GM12878 (cell line): ENCODE measurements at regions of chr3 and their contacts with region 1.

Region 1: GRCh38 chr3:183766745-183767606 is 58.4 kb downstream of the MAP6D1 start:
- DNase-seq: no peak
- ATAC-seq: peak; percentile 99
- H3K4me3 ChIP-seq: no peak overlapping the region
- H3K27ac ChIP-seq: no peak overlapping the region
- H3K4me1 ChIP-seq: no peaks in the 10 kb centered on the region
- H3K27me3 ChIP-seq: no peaks in the 10 kb centered on the region
- CTCF ChIP-seq: peak; percentile 67 to 82 (median 79)
- EP300 ChIP-seq: no peak
- POLR2A ChIP-seq: no peak
- RAD21 ChIP-seq: peak; percentile 89

Region 2: GRCh38 chr3:183475016-183475763 is 291.8 kb before region 1 on chr3:
- CTCF ChIA-PET with region 1: interaction called, 71 read pairs
- POLR2A ChIA-PET with region 1: interaction called, 3 read pairs
- RAD21 ChIA-PET with region 1: interaction called, 35 read pairs
- SMC1A ChIA-PET with region 1: interaction called, 50 read pairs
- in situ Hi-C with region 1: no loop called
- intact Hi-C with region 1: no loop called
- DNase-seq: no peak
- ATAC-seq: no peak
- H3K4me3 ChIP-seq: no peak overlapping the region
- H3K27ac ChIP-seq: no peak overlapping the region
- H3K4me1 ChIP-seq: no peaks in the 10 kb centered on the region
- H3K27me3 ChIP-seq: no peaks in the 10 kb centered on the region; a peak in 1 of 4 replicates
- CTCF ChIP-seq: no peak
- EP300 ChIP-seq: no peak
- POLR2A ChIP-seq: no peak
- RAD21 ChIP-seq: no peak

Region 3: GRCh38 chr3:183481582-183481981 is 285.4 kb before region 1 on chr3:
- CTCF ChIA-PET with region 1: interaction called, 15 read pairs
- POLR2A ChIA-PET with region 1: no interaction called
- RAD21 ChIA-PET with region 1: no interaction called
- SMC1A ChIA-PET with region 1: interaction called, 3 read pairs
- in situ Hi-C with region 1: no loop called
- intact Hi-C with region 1: no loop called
- DNase-seq: no peak
- ATAC-seq: peak; percentile 6; the same call in 2 of the 3 replicates
- H3K4me3 ChIP-seq: no peak overlapping the region
- H3K27ac ChIP-seq: no peak overlapping the region
- H3K4me1 ChIP-seq: no peaks in the 10 kb centered on the region
- H3K27me3 ChIP-seq: no peaks in the 10 kb centered on the region
- CTCF ChIP-seq: no peak
- EP300 ChIP-seq: no peak
- POLR2A ChIP-seq: no peak
- RAD21 ChIP-seq: no peak

Region 4: GRCh38 chr3:183745300-183746098 is 21.5 kb before region 1 on chr3:
- CTCF ChIA-PET with region 1: no interaction called
- POLR2A ChIA-PET with region 1: interaction called, 10 read pairs
- RAD21 ChIA-PET with region 1: no interaction called
- SMC1A ChIA-PET with region 1: interaction called, 3 read pairs
- in situ Hi-C with region 1: no loop called
- intact Hi-C with region 1: no loop called
- DNase-seq: no peak
- ATAC-seq: no peak
- H3K4me3 ChIP-seq: no peak overlapping the region
- H3K27ac ChIP-seq: no peak overlapping the region
- H3K4me1 ChIP-seq: no peaks in the 10 kb centered on the region
- H3K27me3 ChIP-seq: no peaks in the 10 kb centered on the region
- CTCF ChIP-seq: no peak
- EP300 ChIP-seq: no peak
- POLR2A ChIP-seq: no peak
- RAD21 ChIP-seq: no peak

Region 5: DNA sequence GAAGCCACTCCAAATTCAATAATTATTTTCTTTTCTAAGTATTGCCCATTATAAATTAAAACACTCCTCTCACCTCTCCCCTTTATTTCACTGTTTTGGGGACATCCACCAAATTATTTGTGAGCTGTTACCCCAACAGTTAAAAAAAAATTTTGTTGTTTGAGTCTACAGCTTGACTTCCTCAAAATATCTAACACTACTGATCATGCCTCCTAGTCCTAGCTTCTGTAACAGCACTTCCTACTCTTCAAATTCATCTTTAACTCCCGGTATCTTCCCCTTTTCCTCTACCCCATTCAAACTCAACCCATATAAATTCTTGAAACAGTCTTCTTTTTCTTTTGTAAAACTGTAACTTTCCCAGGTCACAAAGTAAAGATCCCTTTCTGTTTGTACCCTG is 101.8 kb after region 1 on chr3:
- CTCF ChIA-PET with region 1: no interaction called
- POLR2A ChIA-PET with region 1: no interaction called
- RAD21 ChIA-PET with region 1: no interaction called
- SMC1A ChIA-PET with region 1: no interaction called
- in situ Hi-C with region 1: no loop called
- intact Hi-C with region 1: no loop called
- DNase-seq: no peak
- ATAC-seq: no peak
- H3K4me3 ChIP-seq: no peak overlapping the region
- H3K27ac ChIP-seq: no peak overlapping the region
- H3K4me1 ChIP-seq: no peaks in the 10 kb centered on the region
- H3K27me3 ChIP-seq: no peaks in the 10 kb centered on the region
- CTCF ChIP-seq: no peak
- EP300 ChIP-seq: no peak
- POLR2A ChIP-seq: no peak
- RAD21 ChIP-seq: no peak